CD8-positive, alpha-beta T cell (primary cell): ENCODE measurements at regions of chr7 and their contacts with region 1.

Region 1: GRCh38 chr7:50266635-50267386 is 37.7 kb upstream of the IKZF1 start:
- DNase-seq: peak; percentile 44 to 90 (median 82)
- ATAC-seq: peak; percentile 80
- H3K4me3 ChIP-seq: peak overlapping the region; percentile 29 to 31
- H3K4me3 Mint-ChIP-seq: peak overlapping the region; percentile 82
- H3K27ac ChIP-seq: peak overlapping the region; percentile 29 to 74
- H3K27ac Mint-ChIP-seq: peak overlapping the region; percentile 96
- H3K4me1 ChIP-seq: peaks cover 92% of the 10 kb centered on the region
- H3K4me1 Mint-ChIP-seq: peaks cover 98% of the 10 kb centered on the region
- H3K27me3 ChIP-seq: no peaks in the 10 kb centered on the region
- H3K27me3 Mint-ChIP-seq: no peaks in the 10 kb centered on the region
- CTCF ChIP-seq: no peak

Region 2: DNA sequence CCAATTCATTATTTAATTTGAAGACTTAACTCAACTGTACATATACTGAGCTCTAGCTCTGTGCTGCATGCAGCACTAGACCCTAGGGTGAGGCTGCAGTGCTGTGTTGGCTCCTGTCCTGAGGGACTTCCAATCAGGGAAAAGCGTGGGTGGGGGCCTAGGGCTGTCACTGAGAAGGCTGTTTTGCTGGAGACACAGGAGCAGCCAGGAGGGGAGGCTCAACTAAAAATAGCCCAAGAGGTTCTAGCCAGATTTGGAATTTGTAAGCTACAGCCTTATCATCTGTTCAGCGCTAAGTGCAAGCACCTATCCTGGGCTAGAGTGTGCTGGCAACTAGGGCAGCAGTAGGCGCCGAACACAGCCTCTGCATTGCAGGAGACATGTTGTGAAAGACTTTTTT is 372.3 kb before region 1 on chr7:
- CTCF ChIA-PET with region 1: no interaction called
- POLR2A ChIA-PET with region 1: no interaction called
- intact Hi-C with region 1: no loop called
- DNase-seq: no peak
- ATAC-seq: no peak
- H3K4me3 ChIP-seq: no peak overlapping the region
- H3K4me3 Mint-ChIP-seq: no peak overlapping the region
- H3K27ac ChIP-seq: no peak overlapping the region
- H3K27ac Mint-ChIP-seq: no peak overlapping the region
- H3K4me1 ChIP-seq: no peaks in the 10 kb centered on the region
- H3K4me1 Mint-ChIP-seq: no peaks in the 10 kb centered on the region
- H3K27me3 ChIP-seq: no peaks in the 10 kb centered on the region
- H3K27me3 Mint-ChIP-seq: peaks cover 6% of the 10 kb centered on the region
- CTCF ChIP-seq: no peak

Region 3: GRCh38 chr7:50022991-50023390 is 243.8 kb before region 1 on chr7:
- CTCF ChIA-PET with region 1: no interaction called
- POLR2A ChIA-PET with region 1: no interaction called
- intact Hi-C with region 1: no loop called
- DNase-seq: no peak
- ATAC-seq: no peak
- H3K4me3 ChIP-seq: no peak overlapping the region
- H3K4me3 Mint-ChIP-seq: no peak overlapping the region
- H3K27ac ChIP-seq: no peak overlapping the region
- H3K27ac Mint-ChIP-seq: no peak overlapping the region
- H3K4me1 ChIP-seq: no peaks in the 10 kb centered on the region
- H3K4me1 Mint-ChIP-seq: no peaks in the 10 kb centered on the region
- H3K27me3 ChIP-seq: no peaks in the 10 kb centered on the region
- H3K27me3 Mint-ChIP-seq: peaks cover 9% of the 10 kb centered on the region
- CTCF ChIP-seq: no peak

Region 4: GRCh38 chr7:50147951-50148808 is 118.6 kb before region 1 on chr7:
- CTCF ChIA-PET with region 1: no interaction called
- POLR2A ChIA-PET with region 1: no interaction called
- intact Hi-C with region 1: loop called in 1 of 2 experiments (anchors 5 kb)
- DNase-seq: peak in 4 of 9 experiments; percentile 18 to 85 (median 60)
- ATAC-seq: peak; percentile 89
- H3K4me3 ChIP-seq: no peak overlapping the region
- H3K4me3 Mint-ChIP-seq: peak overlapping the region; percentile 42
- H3K27ac ChIP-seq: no peak overlapping the region
- H3K27ac Mint-ChIP-seq: peak overlapping the region; percentile 80
- H3K4me1 ChIP-seq: peaks cover 21% of the 10 kb centered on the region
- H3K4me1 Mint-ChIP-seq: peaks cover 36% of the 10 kb centered on the region
- H3K27me3 ChIP-seq: no peaks in the 10 kb centered on the region
- H3K27me3 Mint-ChIP-seq: no peaks in the 10 kb centered on the region
- CTCF ChIP-seq: no peak

Region 5: DNA sequence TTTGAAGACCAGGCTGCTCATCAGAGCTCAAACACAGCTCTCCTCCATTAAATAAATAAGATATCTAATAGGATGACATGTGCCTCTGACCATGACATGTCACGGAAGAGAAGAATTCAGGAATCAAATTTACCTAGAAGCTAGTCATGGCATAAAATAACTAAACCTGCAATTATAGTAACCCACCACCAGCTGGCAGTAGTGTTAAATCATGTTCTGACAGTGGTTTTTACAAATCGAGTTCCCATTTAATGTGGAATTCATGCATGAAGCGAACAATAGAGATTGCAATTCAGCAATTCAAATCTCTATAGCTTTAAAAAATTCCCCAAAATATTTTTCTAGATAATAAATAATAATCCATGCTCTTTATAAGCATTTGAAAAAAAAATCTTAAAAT is 36.8 kb before region 1 on chr7:
- CTCF ChIA-PET with region 1: interaction called, 3 read pairs
- POLR2A ChIA-PET with region 1: interaction called, 8 read pairs
- intact Hi-C with region 1: loop called in 1 of 2 experiments (anchors 5 kb)
- DNase-seq: peak in 2 of 9 experiments; percentile 44 to 60
- ATAC-seq: no peak
- H3K4me3 ChIP-seq: no peak overlapping the region
- H3K4me3 Mint-ChIP-seq: no peak overlapping the region
- H3K27ac ChIP-seq: no peak overlapping the region
- H3K27ac Mint-ChIP-seq: no peak overlapping the region
- H3K4me1 ChIP-seq: peaks cover 28% of the 10 kb centered on the region
- H3K4me1 Mint-ChIP-seq: peaks cover 39% of the 10 kb centered on the region
- H3K27me3 ChIP-seq: no peaks in the 10 kb centered on the region
- H3K27me3 Mint-ChIP-seq: no peaks in the 10 kb centered on the region
- CTCF ChIP-seq: peak; percentile 37

Region 6: GRCh38 chr7:50281680-50282445 is 15.1 kb after region 1 on chr7:
- CTCF ChIA-PET with region 1: interaction called, 8 read pairs
- POLR2A ChIA-PET with region 1: interaction called, 17 read pairs
- intact Hi-C with region 1: loop called (anchors 2 kb)
- DNase-seq: peak in 2 of 9 experiments; percentile 38 to 65
- ATAC-seq: peak; percentile 81
- H3K4me3 ChIP-seq: peak overlapping the region in 1 of 2 experiments; percentile 30
- H3K4me3 Mint-ChIP-seq: peak overlapping the region; percentile 80
- H3K27ac ChIP-seq: peak overlapping the region; percentile 45 to 62
- H3K27ac Mint-ChIP-seq: peak overlapping the region; percentile 96
- H3K4me1 ChIP-seq: peaks cover 53% of the 10 kb centered on the region
- H3K4me1 Mint-ChIP-seq: peaks cover 57% of the 10 kb centered on the region
- H3K27me3 ChIP-seq: no peaks in the 10 kb centered on the region
- H3K27me3 Mint-ChIP-seq: no peaks in the 10 kb centered on the region
- CTCF ChIP-seq: no peak

Region 7: DNA sequence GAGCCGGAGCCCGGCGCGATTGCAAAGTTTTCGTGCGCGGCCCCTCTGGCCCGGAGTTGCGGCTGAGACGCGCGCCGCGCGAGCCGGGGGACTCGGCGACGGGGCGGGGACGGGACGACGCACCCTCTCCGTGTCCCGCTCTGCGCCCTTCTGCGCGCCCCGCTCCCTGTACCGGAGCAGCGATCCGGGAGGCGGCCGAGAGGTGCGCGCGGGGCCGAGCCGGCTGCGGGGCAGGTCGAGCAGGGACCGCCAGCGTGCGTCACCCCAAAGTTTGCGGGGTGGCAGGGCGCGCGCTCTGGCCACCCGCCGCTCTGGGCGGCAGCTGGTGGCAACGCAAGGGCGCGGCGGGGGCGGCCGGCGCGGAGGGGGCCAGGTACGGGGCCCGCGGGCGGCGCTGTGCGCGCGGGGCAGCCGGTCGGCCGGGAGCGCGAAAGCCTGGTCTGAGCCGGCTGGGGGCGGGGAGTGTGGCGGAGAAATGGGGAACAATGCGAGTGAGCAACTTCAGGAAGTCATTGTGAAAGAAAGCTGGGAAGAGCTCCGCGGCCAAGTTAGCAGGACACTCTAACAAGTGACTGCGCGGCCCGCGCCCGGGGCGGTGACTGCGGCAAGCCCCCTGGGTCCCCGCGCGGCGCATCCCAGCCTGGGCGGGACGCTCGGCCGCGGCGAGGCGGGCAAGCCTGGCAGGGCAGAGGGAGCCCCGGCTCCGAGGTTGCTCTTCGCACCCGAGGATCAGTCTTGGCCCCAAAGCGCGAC is 37.5 kb after region 1 on chr7 and contains the start of gene IKZF1:
- CTCF ChIA-PET with region 1: interaction called, 6 read pairs
- POLR2A ChIA-PET with region 1: interaction called, 75 read pairs
- intact Hi-C with region 1: loop called (anchors 1 kb)
- DNase-seq: peak; percentile 32 to 82 (median 65)
- ATAC-seq: peak; percentile 39
- H3K4me3 ChIP-seq: peak within 1 kb of the TSS; percentile 90 to 96
- H3K4me3 Mint-ChIP-seq: peak within 1 kb of the TSS; percentile 93
- H3K27ac ChIP-seq: peak within 1 kb of the TSS; percentile 91 to 96
- H3K27ac Mint-ChIP-seq: peak within 1 kb of the TSS; percentile 96
- H3K4me1 ChIP-seq: peaks cover 51% of the 10 kb centered on the region
- H3K4me1 Mint-ChIP-seq: peaks cover 51% of the 10 kb centered on the region
- H3K27me3 ChIP-seq: no peaks in the 10 kb centered on the region
- H3K27me3 Mint-ChIP-seq: no peaks in the 10 kb centered on the region
- CTCF ChIP-seq: no peak
- total RNA-seq, gene IKZF1: 248 TPM

Region 8: GRCh38 chr7:50359995-50360925 is 93.4 kb after region 1 on chr7:
- CTCF ChIA-PET with region 1: interaction called, 3 read pairs
- POLR2A ChIA-PET with region 1: interaction called, 6 read pairs
- intact Hi-C with region 1: loop called in 1 of 2 experiments (anchors 2 kb)
- DNase-seq: peak; percentile 62 to 96 (median 82)
- ATAC-seq: peak; percentile 83
- H3K4me3 ChIP-seq: peak overlapping the region in 1 of 2 experiments; percentile 17
- H3K4me3 Mint-ChIP-seq: peak overlapping the region; percentile 76
- H3K27ac ChIP-seq: peak overlapping the region; percentile 78 to 91
- H3K27ac Mint-ChIP-seq: peak overlapping the region; percentile 99
- H3K4me1 ChIP-seq: peaks cover 97% of the 10 kb centered on the region
- H3K4me1 Mint-ChIP-seq: peaks cover 98% of the 10 kb centered on the region
- H3K27me3 ChIP-seq: no peaks in the 10 kb centered on the region
- H3K27me3 Mint-ChIP-seq: no peaks in the 10 kb centered on the region
- CTCF ChIP-seq: no peak